Left cardiac atrium (tissue), 4 donors: ENCODE measurements at regions of chr10 and their contacts with region 1.

Region 1: GRCh38 chr10:125123476-125124114 is 36.8 kb downstream of the CTBP2 start:
- DNase-seq: peak; percentile 89
- ATAC-seq: peak; percentile 83 to 91

Region 2: GRCh38 chr10:125084191-125084613 is 39.4 kb before region 1 on chr10:
- intact Hi-C with region 1: loop called in 1 of 2 experiments (anchors 5 kb)
- DNase-seq: peak; percentile 71
- ATAC-seq: peak; percentile 36 to 88